CD8-positive, alpha-beta T cell (primary cell): ENCODE measurements at regions of chrX and their contacts with region 1.

Region 1: GRCh38 chrX:10098270-10098713 is 58.5 kb upstream of the CLCN4 start:
- DNase-seq: peak in 7 of 9 experiments; percentile 29 to 77 (median 55)
- ATAC-seq: peak; percentile 86
- H3K4me3 ChIP-seq: peak overlapping the region; percentile 61 to 76
- H3K4me3 Mint-ChIP-seq: peak overlapping the region; percentile 94
- H3K27ac ChIP-seq: peak overlapping the region; percentile 78 to 83
- H3K27ac Mint-ChIP-seq: peak overlapping the region; percentile 97
- H3K4me1 ChIP-seq: peaks cover 18% of the 10 kb centered on the region
- H3K4me1 Mint-ChIP-seq: peaks cover 55% of the 10 kb centered on the region
- H3K27me3 ChIP-seq: no peaks in the 10 kb centered on the region
- H3K27me3 Mint-ChIP-seq: no peaks in the 10 kb centered on the region
- CTCF ChIP-seq: no peak

Region 2: DNA sequence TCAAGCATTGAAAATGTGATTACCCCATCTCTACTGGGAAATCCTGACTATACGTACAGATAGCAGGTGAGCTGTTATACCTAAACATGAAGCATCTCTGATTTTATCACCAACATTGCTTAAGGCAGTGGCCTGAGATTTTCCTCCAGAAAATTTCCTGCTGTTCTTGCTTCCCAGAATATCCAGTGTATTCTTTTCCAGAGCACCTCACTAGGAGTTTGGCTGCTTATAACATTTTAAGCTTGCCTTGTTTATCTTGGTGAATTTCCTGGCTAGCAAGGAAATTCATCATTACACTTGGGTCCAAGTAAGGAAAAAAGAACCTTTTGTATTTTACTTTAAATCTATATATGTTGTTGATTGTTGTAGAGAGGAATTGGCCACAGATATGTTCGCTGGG is 14.5 kb before region 1 on chrX:
- CTCF ChIA-PET with region 1: interaction called, 5 read pairs
- POLR2A ChIA-PET with region 1: interaction called, 5 read pairs
- intact Hi-C with region 1: loop called in 1 of 2 experiments (anchors 2 kb)
- DNase-seq: no peak
- ATAC-seq: no peak
- H3K4me3 ChIP-seq: no peak overlapping the region
- H3K4me3 Mint-ChIP-seq: no peak overlapping the region
- H3K27ac ChIP-seq: peak overlapping the region in 1 of 2 experiments; percentile 86
- H3K27ac Mint-ChIP-seq: peak overlapping the region; percentile 88
- H3K4me1 ChIP-seq: peaks cover 21% of the 10 kb centered on the region
- H3K4me1 Mint-ChIP-seq: peaks cover 45% of the 10 kb centered on the region
- H3K27me3 ChIP-seq: no peaks in the 10 kb centered on the region
- H3K27me3 Mint-ChIP-seq: no peaks in the 10 kb centered on the region
- CTCF ChIP-seq: no peak